Natural killer cell (primary cell): ENCODE measurements at regions of chr1 and their contacts with region 1.

Region 1: GRCh38 chr1:243837907-243838535 is 12.0 kb downstream of the AKT3 start:
- DNase-seq: peak in 1 of 2 donors; percentile 61
- ATAC-seq: peak; percentile 75 to 94 (median 82)
- H3K4me3 ChIP-seq: no peak overlapping the region
- H3K4me3 Mint-ChIP-seq: peak overlapping the region; percentile 65
- H3K27ac ChIP-seq: peak overlapping the region; percentile 72
- H3K27ac Mint-ChIP-seq: peak overlapping the region; percentile 81 to 84
- H3K4me1 ChIP-seq: peaks cover under 1% of the 10 kb centered on the region
- H3K4me1 Mint-ChIP-seq: peaks cover 31 to 34% of the 10 kb centered on the region in 2 donors
- H3K27me3 ChIP-seq: no peaks in the 10 kb centered on the region
- H3K27me3 Mint-ChIP-seq: no peaks in the 10 kb centered on the region
- CTCF ChIP-seq: no peak

Region 2: DNA sequence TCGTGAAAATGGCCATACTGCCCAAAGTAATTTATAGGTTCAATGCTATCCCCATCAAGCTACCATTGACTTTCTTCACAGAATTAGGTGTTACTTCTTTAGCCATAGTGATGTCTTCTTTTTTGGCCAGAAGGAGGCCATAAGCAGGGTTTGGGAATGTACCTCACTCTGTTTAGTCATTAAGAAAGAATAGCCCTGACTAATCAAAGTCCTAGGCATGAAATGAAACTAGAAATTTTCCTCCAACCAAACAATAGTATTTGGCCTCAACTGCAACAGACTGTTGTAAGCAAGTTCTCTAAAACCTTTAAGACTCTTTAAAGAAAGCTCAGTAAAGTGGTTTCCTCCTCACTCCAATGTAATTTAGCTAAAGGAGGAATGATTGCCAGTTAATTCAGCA is 151.9 kb before region 1 on chr1:
- intact Hi-C with region 1: no loop called
- DNase-seq: no peak
- ATAC-seq: peak in 1 of 3 donors; percentile 26
- H3K4me3 ChIP-seq: no peak overlapping the region
- H3K4me3 Mint-ChIP-seq: no peak overlapping the region
- H3K27ac ChIP-seq: no peak overlapping the region
- H3K27ac Mint-ChIP-seq: no peak overlapping the region
- H3K4me1 ChIP-seq: no peaks in the 10 kb centered on the region
- H3K4me1 Mint-ChIP-seq: peaks cover 0 to 18% of the 10 kb centered on the region in 2 donors
- H3K27me3 ChIP-seq: no peaks in the 10 kb centered on the region
- H3K27me3 Mint-ChIP-seq: no peaks in the 10 kb centered on the region
- CTCF ChIP-seq: no peak

Region 3: DNA sequence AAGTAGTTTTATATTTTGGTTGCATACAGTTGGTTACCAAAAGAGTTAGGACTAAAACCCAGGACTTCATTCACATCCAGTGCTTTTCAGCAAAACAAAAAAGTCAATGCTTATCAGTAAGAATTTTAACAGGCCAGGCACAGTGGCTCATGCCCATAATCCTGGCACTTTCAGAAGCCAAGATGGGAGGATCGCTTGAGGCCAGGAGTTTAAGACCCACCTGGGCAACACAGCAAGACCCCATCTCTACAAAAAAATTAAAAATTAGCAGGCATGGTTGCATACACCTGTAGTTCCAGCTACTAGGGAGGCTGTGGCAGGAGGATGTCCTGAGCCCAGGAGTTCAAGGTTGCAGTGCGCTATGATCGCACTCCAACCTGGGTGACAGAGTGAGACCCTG is 35.3 kb before region 1 on chr1:
- intact Hi-C with region 1: loop called (anchors 2 kb)
- DNase-seq: no peak
- ATAC-seq: no peak
- H3K4me3 ChIP-seq: no peak overlapping the region
- H3K4me3 Mint-ChIP-seq: no peak overlapping the region
- H3K27ac ChIP-seq: no peak overlapping the region
- H3K27ac Mint-ChIP-seq: peak overlapping the region in 1 of 2 donors; percentile 88
- H3K4me1 ChIP-seq: peaks cover 17% of the 10 kb centered on the region
- H3K4me1 Mint-ChIP-seq: peaks cover 46 to 50% of the 10 kb centered on the region in 2 donors
- H3K27me3 ChIP-seq: no peaks in the 10 kb centered on the region
- H3K27me3 Mint-ChIP-seq: no peaks in the 10 kb centered on the region
- CTCF ChIP-seq: no peak